ENCODE measurements at regions of chr5 and their contacts with region 1.

Region 1: GRCh38 chr5:147509710-147510651 is at the start of gene DPYSL3:
- DNase-seq: peak; percentile 88
- ATAC-seq: peak; percentile 96
- total RNA-seq, gene DPYSL3: 22.1 TPM

Region 2: DNA sequence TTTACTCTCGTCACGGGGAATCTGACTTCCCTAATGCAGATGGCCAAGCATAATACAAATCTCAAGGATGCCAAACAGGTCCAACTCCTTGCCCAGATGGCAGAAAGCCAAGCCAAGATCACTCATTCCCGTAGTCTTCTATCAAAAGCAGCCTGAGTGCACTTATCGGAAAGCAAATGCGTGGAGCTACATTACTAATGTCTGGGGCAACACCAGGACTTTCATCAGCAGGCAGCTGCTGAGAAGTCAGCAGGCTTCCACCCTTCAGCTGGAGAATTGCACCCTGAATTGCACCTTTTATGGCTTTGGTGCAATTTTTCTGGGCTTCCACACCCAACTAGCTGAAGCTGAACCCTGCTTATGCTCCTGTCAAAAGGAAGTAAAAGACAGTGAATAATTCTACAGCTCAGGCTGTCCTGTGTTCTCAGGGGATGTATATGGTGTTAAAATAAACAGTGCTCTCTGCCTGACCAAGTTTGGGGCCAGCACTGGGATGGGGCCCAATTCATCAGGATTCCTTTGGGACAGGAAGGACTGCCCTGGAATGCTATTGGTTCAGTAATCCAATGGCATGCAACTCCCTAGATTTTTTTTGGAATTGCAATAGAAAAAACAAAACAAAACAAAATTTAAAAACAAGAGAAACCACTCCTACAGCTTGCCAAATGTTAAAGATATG is 92.7 kb before region 1 on chr5:
- intact Hi-C with region 1: no loop called
- DNase-seq: no peak
- ATAC-seq: peak; percentile 80

Region 3: DNA sequence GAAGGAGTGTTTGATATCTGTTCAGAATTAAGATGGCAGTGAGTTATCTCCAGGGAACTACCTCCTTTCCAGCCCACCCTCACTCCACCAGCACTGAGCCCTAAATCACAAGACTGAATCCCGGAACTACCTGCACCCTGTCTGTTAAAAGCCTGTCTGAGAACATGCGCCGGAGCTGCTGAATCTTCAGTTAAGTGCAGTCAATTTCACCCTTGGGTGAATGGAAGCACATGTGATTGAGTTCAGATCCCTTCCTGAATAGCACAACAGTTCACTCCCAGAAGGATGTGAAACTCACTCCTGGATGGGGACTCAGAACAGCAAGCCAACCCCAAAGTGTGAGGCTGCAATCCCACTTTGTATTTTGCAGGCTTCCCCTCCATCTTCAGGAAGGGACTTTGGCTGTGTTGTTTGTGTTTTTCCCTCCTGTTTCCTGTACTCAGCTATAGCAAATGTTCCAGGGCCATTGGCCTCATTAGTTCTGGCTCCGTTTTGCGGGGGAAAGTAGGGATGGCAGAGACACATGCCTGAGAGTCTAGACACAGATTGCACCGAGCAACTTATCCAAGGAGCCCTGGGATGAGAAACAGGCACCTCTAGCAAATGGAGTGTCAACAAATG is 43.5 kb before region 1 on chr5:
- intact Hi-C with region 1: loop called (anchors 5 kb)
- DNase-seq: no peak
- ATAC-seq: no peak

Region 4: DNA sequence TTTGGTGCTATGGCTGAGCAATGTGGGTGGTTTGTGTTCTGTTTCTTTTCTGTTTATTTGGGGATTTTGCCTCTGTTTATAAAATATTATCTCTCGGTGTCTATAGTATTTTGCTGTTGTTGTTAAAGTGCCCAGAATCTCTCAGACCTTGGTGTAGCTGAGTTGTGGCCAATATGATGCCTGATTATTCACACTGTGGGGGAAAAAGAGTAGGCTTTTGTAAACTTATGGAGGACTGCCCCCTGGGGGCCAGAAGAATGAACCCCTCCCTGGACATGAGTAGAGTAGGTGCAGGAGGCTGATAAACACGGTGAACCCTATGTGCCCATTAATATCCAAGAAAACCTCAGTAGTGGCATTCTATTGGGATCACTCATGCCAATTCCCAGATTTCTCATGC is 48.8 kb after region 1 on chr5:
- intact Hi-C with region 1: loop called (anchors 5 kb)
- DNase-seq: peak; percentile 70
- ATAC-seq: peak; percentile 62